Tibial artery (tissue), 4 donors: ENCODE measurements at regions of chrX and their contacts with region 1.

Region 1: GRCh38 chrX:114071412-114071811 is 512.5 kb upstream of the HTR2C start:
- DNase-seq: no peak
- H3K4me3 ChIP-seq: no peak overlapping the region
- H3K27ac ChIP-seq: no peak overlapping the region
- H3K4me1 ChIP-seq: no peaks in the 10 kb centered on the region
- H3K27me3 ChIP-seq: no peaks in the 10 kb centered on the region
- CTCF ChIP-seq: no peak

Region 2: DNA sequence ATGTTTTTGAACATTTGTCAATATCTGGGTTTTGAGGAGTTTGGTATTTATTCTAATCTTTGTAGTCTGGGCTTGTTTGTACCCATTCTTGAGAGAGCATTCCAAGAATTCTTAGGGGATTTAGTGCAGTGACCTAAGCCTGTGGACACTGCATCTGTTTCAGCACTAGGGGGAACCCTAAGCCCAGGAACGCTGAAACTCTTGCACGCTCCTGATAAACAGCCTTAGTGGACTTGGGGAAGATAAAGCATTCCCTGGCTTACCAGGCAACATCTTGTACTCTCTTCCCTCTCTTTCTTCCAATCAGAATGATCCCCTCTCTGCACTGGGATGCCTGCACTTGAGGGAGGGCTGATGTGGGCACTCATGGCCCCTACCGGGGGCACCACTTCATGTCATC is 142.4 kb before region 1 on chrX:
- intact Hi-C with region 1: loop called (anchors 5 kb)
- DNase-seq: no peak
- H3K4me3 ChIP-seq: no peak overlapping the region
- H3K27ac ChIP-seq: no peak overlapping the region
- H3K4me1 ChIP-seq: no peaks in the 10 kb centered on the region
- H3K27me3 ChIP-seq: no peaks in the 10 kb centered on the region
- CTCF ChIP-seq: peak in 1 of 2 experiments; percentile 10

Region 3: GRCh38 chrX:114210879-114211278 is 139.5 kb after region 1 on chrX:
- intact Hi-C with region 1: no loop called
- DNase-seq: no peak
- H3K4me3 ChIP-seq: no peak overlapping the region
- H3K27ac ChIP-seq: no peak overlapping the region
- H3K4me1 ChIP-seq: no peaks in the 10 kb centered on the region
- H3K27me3 ChIP-seq: no peaks in the 10 kb centered on the region
- CTCF ChIP-seq: no peak